BJ (cell line): ENCODE measurements at regions of chr4 and their contacts with region 1.

Region 1: GRCh38 chr4:73922766-73923630 is 53.8 kb downstream of the CXCL1 start:
- DNase-seq: no peak
- H3K4me3 ChIP-seq: no peak overlapping the region
- H3K27me3 ChIP-seq: no peaks in the 10 kb centered on the region
- CTCF ChIP-seq: peak; percentile 43

Region 2: DNA sequence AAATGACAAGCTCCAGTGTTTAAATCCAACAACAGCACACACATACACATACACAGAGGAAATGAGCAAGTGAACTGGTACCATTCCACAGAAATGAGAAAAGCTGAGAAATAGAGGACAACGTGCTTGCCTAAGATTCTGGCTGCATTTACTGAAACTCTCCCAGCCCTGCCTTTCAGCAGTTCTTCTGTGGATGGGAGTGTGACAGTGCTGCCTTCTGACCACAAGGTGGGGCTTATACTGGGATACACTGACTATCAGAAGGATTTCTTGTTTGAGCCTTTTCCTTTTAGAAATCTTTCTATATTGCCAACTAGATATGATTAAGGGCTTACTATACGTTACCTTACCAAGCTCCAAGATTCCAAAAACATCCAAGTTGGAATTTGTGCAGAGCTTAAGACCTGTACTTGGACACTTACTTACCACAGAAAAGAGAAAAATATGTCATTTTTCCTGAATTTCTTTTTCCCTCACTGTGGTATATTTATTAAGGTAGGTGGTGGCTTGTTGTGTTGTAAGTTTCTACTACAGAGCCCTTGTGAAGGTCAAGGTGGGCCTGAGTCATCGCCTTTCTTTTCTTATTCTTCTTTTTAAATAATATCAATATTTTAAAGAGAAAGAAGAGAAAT is 193.3 kb before region 1 on chr4:
- CTCF ChIA-PET with region 1: interaction called, 13 read pairs
- POLR2A ChIA-PET with region 1: no interaction called
- DNase-seq: no peak
- H3K4me3 ChIP-seq: no peak overlapping the region
- H3K27me3 ChIP-seq: no peaks in the 10 kb centered on the region
- CTCF ChIP-seq: peak; percentile 86